ACHN (cell line): ENCODE measurements at regions of chr12 and their contacts with region 1.

Region 1: DNA sequence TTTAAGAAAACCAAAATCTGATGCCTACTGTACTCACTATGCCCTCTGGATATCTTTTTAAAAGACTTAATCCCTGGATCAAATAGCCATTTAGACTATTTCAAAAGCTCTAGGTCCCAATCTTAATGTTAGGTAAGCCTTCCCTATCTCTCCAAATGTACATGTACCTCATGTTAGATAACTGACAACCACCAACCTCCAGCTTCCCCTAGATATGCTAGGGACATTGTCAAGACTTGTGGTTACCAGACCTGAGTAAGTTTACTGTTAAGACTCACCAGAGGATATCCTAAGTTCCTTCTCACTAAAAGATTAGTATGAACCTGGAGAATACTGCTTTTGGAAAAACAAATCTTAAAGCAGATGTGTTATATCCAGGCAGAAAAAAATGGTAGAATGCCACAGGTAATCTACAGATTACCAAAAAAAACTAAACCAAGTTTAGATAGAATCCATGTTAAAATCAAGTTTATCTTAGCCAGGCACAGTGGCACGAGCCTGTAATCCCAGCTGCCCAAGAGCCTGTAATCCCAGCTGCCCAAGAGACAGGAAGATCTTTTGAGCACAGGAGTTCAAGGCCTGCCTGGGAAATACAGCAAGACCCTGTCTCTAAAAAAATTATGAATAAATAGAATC is 9.7 kb downstream of the NAP1L1 start:
- DNase-seq: no peak

Region 2: GRCh38 chr12:76144245-76144549 is 69.4 kb after region 1 on chr12:
- in situ Hi-C with region 1: no loop called
- DNase-seq: no peak

Region 3: DNA sequence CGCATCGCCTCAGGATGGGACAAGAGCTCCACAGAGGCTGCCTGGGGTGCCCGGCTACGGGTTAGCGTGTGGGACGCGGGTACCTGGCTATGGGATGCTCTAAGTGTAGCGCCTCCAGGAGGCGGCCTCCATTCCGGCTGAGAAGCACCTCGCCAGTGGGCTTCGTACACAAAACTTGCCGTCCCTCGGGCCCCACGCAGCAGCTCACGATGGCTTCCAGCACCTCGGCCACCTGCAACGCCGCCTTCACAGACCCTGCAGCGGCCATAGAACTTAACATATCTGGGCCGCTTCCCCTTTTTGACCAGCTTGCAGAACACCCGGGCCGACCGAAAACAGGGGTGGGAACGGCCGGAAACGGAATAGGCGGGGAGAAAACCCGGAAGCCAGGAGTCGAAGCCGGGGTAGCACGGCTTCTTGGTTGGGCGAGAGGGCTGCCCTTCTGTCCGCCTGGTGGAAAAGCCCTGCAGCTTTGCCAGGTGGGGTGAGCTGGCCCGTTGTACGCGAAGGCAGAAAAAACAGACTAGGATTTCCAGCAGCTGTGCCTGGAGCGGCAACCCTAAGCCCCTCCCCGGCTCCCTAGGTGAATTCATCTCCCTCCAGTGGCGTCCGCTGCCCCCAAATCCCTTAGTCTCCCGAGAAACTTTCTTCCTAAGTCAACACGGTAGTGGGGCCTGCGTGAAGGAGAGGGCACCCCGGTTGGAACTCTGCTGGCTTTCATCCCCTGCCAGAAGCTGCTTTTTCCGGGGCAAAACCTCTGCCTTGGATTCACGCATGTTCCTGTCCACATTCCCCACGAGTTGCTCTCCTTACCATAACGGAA is 273.5 kb after region 1 on chr12 and contains the start of gene BBS10:
- in situ Hi-C with region 1: loop called (anchors 25 kb)
- DNase-seq: peak; percentile 96

Region 4: DNA sequence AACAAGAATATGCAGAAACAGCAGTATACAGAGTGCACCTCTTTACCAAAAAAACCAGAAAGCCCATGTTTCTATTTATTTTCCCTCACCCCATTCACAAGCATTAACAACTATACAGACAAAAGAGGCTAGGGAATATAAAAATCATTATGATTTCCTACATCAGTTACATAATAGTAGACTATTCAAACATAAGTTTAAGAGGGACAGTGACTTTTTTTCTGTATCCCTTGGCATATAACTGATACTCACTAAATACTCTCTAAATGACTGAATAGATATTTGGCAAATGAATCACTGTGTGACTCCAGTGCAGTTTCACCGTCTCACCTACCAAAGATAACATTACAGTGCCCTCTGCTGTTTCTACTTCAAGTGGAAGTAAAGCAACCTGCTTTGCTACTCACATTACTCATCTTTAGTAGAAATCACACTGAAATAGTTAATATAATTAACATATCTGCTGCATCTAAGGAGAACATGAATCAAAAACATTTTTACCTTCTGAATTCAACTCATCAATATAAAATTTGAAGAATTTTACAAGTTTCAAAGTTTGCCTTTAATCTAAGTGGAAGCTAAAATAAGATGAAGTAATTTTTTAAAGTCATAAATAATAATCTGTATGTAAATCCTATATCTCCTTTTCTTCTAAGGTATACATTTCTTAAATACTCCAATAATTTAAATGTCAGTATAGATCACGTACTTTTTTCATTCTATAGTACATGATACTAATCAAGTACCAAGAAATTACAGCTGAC is 380.9 kb after region 1 on chr12:
- in situ Hi-C with region 1: loop called (anchors 25 kb)
- DNase-seq: peak; percentile 98